Vagina (tissue), 2 donors: ENCODE measurements at regions of chr20 and their contacts with region 1.

Region 1: DNA sequence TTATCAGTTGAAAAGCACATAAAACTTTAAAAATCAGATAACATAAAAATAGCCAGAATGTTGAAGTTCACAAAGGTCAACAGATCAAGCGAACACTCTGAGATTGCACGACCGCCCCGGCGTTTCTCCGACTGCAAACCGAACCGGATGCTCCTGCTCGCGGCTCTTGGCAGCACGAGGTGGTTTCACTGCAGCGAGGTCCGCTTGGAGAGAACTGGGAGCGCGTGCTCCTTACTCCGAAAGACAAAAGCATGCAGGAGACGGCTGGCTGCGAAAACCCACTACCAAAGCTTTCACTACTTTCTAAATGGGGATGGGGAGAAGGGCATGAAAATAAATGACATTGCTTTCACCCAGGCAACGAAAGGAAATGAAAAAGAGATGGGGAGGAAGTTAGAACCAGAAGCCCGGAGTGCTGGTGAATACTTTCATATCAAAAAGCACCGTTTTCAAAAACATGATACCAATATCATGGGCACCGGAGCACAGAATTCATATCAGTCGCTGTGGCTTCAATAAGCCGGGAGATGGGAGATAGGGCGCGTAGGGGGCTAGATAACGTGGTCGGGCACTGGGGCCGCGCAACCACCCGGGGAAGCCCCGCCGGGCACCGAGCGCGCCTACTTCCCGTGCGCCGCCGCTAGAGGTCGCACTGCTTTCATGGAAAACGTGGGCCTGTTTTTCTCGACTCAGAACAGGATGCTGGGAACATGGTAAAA is 8.3 kb upstream of the ANKRD60 start:
- DNase-seq: no peak
- H3K4me3 ChIP-seq: peak overlapping the region; percentile 37 to 38
- H3K27ac ChIP-seq: peak overlapping the region; percentile 61
- H3K4me1 ChIP-seq: peaks cover 6% of the 10 kb centered on the region
- H3K27me3 ChIP-seq: no peaks in the 10 kb centered on the region
- CTCF ChIP-seq: peak; percentile 85 to 95 (median 93)
- POLR2A ChIP-seq: no peak

Region 2: GRCh38 chr20:58447511-58448391 is 211.0 kb after region 1 on chr20:
- intact Hi-C with region 1: loop called (anchors 10 kb)
- DNase-seq: no peak
- H3K4me3 ChIP-seq: no peak overlapping the region
- H3K27ac ChIP-seq: no peak overlapping the region
- H3K4me1 ChIP-seq: no peaks in the 10 kb centered on the region
- H3K27me3 ChIP-seq: no peaks in the 10 kb centered on the region
- CTCF ChIP-seq: no peak
- POLR2A ChIP-seq: no peak